Prostate gland (tissue), 2 donors: ENCODE measurements at regions of chr2 and their contacts with region 1.

Region 1: GRCh38 chr2:162053066-162053807 is 20.8 kb downstream of the DPP4 start:
- DNase-seq: no peak
- H3K4me3 ChIP-seq: no peak overlapping the region
- H3K27ac ChIP-seq: no peak overlapping the region
- H3K4me1 ChIP-seq: no peaks in the 10 kb centered on the region
- H3K27me3 ChIP-seq: no peaks in the 10 kb centered on the region
- CTCF ChIP-seq: no peak
- POLR2A ChIP-seq: no peak

Region 2: DNA sequence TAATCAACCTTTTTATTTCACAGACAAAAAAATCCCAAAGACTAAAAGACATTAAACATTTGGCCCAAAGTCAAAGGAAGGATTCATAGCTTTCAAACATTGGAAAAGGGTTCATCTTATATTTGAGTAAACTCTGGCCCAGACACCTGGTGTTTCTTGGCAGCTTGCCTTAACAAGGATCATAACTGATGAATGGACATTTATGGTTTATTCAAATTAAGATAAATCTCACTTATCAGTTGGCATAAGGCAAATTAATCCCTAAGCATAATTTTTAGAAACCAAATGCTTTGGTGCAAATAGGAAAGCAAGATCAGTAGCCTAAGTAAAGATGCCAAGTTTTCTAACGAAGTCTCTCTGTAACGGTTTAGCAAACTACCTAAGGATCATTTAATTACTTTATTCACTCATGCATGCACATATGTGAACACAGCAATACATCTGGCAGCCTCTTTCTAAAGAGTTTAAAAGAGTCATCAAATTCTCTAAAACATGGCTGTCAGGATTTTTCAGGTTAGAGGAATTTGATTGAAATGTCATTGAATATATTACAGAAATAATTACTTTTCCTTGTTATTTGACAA is 1236.2 kb before region 1 on chr2:
- intact Hi-C with region 1: no loop called
- DNase-seq: no peak
- H3K4me3 ChIP-seq: no peak overlapping the region
- H3K27ac ChIP-seq: no peak overlapping the region
- H3K4me1 ChIP-seq: no peaks in the 10 kb centered on the region
- H3K27me3 ChIP-seq: no peaks in the 10 kb centered on the region
- CTCF ChIP-seq: no peak
- POLR2A ChIP-seq: no peak

Region 3: DNA sequence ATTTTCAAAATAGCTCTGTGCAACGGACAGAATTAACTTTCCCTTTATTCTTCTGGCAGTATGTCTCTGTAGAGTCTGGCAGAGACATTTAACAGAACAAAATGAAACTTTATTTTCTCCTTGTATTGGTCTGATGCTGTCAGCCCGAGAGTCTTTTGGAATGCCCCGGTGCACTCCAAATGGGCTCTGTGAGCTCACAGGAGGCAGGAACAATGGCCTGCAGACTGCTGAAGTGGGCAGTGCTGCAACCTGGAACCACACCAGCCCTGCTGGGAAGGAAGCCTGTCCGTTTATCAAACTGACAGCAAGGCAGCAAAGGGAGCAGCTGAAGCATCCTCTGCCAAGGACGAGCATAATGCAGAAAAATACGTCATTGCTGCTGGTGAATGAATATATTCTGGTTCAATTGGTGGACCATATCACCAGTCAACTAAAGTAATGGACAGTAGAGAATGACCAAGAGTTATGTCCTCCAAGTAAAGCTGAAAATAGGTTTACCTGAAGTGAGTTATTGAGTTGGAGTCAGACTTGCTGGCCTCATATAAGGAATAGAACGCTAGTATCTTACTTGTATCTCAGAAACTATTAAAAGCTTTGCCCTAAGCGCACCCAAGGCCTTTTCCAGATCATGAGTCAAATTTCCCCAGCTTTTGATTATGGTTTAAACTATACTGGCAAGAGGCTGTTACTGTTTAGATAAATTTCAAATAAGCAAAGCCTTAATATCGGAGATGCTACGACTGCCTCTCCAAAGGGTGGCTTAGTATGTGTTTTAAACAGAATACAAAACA is 1100.6 kb before region 1 on chr2:
- intact Hi-C with region 1: no loop called
- DNase-seq: no peak
- H3K4me3 ChIP-seq: no peak overlapping the region
- H3K27ac ChIP-seq: no peak overlapping the region
- H3K4me1 ChIP-seq: no peaks in the 10 kb centered on the region
- H3K27me3 ChIP-seq: no peaks in the 10 kb centered on the region
- CTCF ChIP-seq: no peak
- POLR2A ChIP-seq: no peak

Region 4: DNA sequence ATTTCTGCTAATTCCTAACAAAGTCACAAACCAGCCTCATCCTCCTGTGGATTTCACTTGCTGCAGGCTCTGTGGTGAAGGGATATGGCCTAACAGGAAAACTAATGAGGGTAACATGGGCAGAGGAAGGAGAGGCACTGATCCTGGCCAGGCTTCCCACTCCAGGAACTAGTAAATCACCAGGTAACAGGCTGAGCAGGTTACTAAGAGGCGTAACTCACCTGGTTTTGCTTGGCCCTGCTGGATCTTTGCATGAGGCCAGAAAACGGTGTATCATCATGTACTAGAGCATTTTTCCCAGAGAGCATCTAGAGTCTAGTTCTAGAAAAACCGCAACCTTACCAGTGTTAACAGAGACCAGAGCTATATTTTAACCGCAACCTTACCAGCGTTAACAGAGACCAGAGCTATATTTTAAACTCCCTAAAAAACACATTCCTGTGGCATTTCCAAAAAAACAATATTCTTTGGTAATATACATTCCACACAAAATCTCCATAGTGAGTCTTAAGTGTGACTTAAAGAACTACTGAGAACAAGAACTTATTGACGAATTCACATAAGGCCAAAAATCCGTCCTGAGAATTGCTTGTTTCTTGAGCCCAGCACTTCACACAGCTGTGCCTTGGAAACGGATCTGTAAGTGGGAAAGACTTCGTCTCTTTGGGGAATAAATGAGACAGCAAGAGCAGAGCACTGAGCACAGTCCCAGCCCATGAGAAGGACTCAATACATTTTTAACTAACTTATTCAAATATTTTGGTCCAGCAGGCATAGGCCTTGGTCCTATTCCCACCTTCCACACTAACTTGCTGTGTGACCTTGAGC is 22.7 kb before region 1 on chr2:
- intact Hi-C with region 1: loop called (anchors 2 kb)
- DNase-seq: no peak
- H3K4me3 ChIP-seq: no peak overlapping the region
- H3K27ac ChIP-seq: peak overlapping the region in 1 of 2 donors; percentile 27
- H3K4me1 ChIP-seq: no peaks in the 10 kb centered on the region
- H3K27me3 ChIP-seq: no peaks in the 10 kb centered on the region
- CTCF ChIP-seq: no peak
- POLR2A ChIP-seq: no peak

Region 5: GRCh38 chr2:162153608-162154224 is 100.5 kb after region 1 on chr2:
- intact Hi-C with region 1: no loop called
- DNase-seq: no peak
- H3K4me3 ChIP-seq: no peak overlapping the region
- H3K27ac ChIP-seq: no peak overlapping the region
- H3K4me1 ChIP-seq: no peaks in the 10 kb centered on the region
- H3K27me3 ChIP-seq: no peaks in the 10 kb centered on the region
- CTCF ChIP-seq: no peak
- POLR2A ChIP-seq: no peak